ENCODE measurements at regions of chr9 and their contacts with region 1.

Region 1: DNA sequence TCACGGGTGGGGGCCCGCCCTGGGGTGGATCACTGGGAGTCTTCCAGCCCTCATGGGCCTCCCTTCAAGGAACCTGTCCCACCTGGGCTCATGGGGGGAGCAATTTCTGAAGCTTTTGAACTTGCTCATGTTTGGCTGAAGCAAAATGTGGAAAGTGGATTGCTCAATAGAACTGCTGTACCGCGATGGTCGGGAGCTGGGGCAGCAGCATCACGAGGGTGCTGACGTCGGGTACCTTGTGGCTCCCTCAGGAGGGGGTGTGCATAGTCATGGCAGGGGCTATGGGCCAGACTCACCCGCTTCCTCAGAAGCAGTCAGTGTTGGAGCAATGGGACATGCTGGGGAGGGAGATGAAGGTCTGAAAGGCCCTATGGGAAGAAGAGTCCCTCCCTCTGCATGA is 57.9 kb downstream of the PRRT1B start:
- DNase-seq: no peak
- H3K4me3 ChIP-seq: no peak overlapping the region
- H3K27ac ChIP-seq: no peak overlapping the region
- H3K4me1 ChIP-seq: peaks cover 5% of the 10 kb centered on the region
- H3K27me3 ChIP-seq: no peaks in the 10 kb centered on the region
- CTCF ChIP-seq: no peak

Region 2: GRCh38 chr9:131554088-131554864 is 48.9 kb before region 1 on chr9:
- CTCF ChIA-PET with region 1: no interaction called
- dilution Hi-C with region 1: loop called (anchors 5 kb)
- in situ Hi-C with region 1: no loop called
- intact Hi-C with region 1: no loop called
- DNase-seq: no peak
- H3K4me3 ChIP-seq: no peak overlapping the region
- H3K27ac ChIP-seq: no peak overlapping the region
- H3K4me1 ChIP-seq: no peaks in the 10 kb centered on the region
- H3K27me3 ChIP-seq: peaks cover 6% of the 10 kb centered on the region
- CTCF ChIP-seq: no peak

Region 3: GRCh38 chr9:131567910-131568309 is 35.3 kb before region 1 on chr9:
- CTCF ChIA-PET with region 1: no interaction called
- dilution Hi-C with region 1: no loop called
- in situ Hi-C with region 1: no loop called
- intact Hi-C with region 1: no loop called
- DNase-seq: no peak
- H3K4me3 ChIP-seq: no peak overlapping the region
- H3K27ac ChIP-seq: no peak overlapping the region
- H3K4me1 ChIP-seq: no peaks in the 10 kb centered on the region
- H3K27me3 ChIP-seq: no peaks in the 10 kb centered on the region
- CTCF ChIP-seq: no peak

Region 4: DNA sequence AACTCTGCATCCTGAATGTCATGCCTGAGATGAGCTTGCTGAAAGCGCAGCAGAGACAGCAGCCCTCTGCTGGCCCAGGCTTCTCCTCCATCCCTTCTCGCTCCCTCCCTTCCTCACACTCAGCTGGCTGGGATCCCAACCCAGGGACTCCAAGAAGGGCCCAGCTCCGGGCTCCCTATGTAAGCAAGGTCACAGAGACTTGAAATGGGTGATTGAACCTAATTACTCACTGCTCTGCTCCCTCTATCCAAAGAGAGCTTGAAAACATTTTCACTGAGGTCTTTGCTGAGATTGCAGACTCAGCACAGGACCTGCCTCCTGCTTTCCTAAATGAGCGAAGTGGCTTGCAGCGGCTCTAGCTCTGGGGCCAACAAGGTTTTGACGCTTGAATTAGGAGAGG is 93.9 kb after region 1 on chr9:
- CTCF ChIA-PET with region 1: no interaction called
- dilution Hi-C with region 1: no loop called
- in situ Hi-C with region 1: no loop called
- intact Hi-C with region 1: no loop called
- DNase-seq: no peak
- H3K4me3 ChIP-seq: no peak overlapping the region
- H3K27ac ChIP-seq: no peak overlapping the region
- H3K4me1 ChIP-seq: peaks cover 7% of the 10 kb centered on the region
- H3K27me3 ChIP-seq: no peaks in the 10 kb centered on the region
- CTCF ChIP-seq: no peak

Measured in mammary epithelial cell (primary cell).